ENCODE measurements at regions of chr13 and their contacts with region 1.

Region 1: DNA sequence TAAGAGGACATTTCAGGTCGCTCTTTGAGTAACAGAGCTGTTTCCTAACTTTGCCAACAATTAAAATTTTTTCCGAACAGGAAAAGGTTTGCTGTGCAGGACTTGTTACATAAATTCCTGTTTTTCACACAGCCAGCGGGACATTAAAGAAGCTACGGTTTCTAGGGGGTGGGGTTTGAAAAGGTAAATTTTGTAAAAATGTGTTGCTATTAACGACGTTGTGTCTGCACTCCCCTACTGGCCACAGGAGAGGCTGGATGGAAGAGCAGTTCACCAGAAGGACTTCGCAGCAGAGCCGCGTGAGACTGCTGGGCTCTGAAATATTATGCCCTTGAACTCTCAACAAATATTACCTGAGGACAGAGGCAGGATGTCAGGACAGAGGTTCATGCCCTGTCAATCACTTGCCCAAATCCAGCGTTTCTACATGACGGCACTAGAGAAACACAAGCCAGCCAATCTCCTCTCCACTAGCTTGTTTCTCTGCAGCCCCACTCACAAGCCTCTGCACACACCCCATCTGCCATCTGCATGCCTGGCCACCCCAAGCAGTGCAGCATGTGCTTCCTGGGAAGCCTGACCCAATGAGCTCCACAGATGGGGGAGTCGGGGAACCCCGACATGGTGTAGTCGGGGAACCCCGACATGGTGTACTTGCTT is 102.0 kb downstream of the FOXO1 start:
- DNase-seq: no peak
- ATAC-seq: no peak

Region 2: DNA sequence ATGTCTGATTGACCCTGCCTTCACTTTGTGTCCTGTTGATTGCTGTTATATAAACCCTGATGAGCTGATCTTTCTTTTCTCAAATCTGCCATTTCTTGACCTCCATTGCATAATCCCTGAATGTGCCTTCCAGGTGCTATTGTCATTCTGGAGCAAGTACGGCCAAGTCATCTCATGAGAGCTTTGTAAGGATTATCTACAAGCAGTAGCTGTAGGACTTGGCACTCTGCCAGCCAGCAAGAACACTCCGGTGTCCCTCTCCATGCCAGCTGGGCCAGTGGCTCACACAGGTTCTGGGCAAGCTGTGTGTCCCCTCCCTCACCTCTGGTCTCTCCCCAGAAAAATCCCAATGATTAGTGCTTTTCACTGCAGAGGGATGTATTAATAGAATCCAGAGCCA is 246.1 kb before region 1 on chr13:
- intact Hi-C with region 1: loop called (anchors 10 kb)
- DNase-seq: peak; percentile 70
- ATAC-seq: peak; percentile 50

Region 3: GRCh38 chr13:40503966-40504591 is 60.4 kb before region 1 on chr13:
- intact Hi-C with region 1: no loop called
- DNase-seq: no peak
- ATAC-seq: no peak

Region 4: GRCh38 chr13:40615619-40616018 is 51.1 kb after region 1 on chr13:
- intact Hi-C with region 1: loop called (anchors 5 kb)
- DNase-seq: no peak
- ATAC-seq: no peak

Region 5: DNA sequence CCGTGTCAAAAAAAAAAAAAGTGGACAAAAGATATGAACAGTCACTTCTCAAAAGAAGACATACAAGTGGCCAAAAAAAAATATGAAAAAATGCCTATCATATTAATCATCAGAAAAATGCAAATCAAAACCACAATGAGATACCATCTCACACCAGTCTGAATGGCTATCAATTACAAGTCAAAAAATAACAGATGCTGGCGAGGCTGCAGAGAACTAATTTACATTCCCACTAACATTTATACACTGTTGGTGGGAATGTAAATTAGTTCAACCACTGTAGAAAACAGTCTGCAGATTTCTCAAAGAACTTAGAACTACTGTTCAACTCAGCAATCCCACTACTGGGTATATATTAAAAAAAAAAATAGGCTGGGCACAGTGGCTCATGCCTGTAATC is 128.5 kb after region 1 on chr13:
- intact Hi-C with region 1: no loop called
- DNase-seq: no peak
- ATAC-seq: no peak